ENCODE measurements at regions of chr1 and their contacts with region 1.

Region 1: GRCh38 chr1:117527566-117528102 is 78.2 kb upstream of the TENT5C start:
- DNase-seq: no peak
- ATAC-seq: no peak
- H3K4me3 ChIP-seq: no peak overlapping the region
- H3K27ac ChIP-seq: no peak overlapping the region
- H3K4me1 ChIP-seq: no peaks in the 10 kb centered on the region
- H3K27me3 ChIP-seq: no peaks in the 10 kb centered on the region
- CTCF ChIP-seq: no peak
- EP300 ChIP-seq: no peak
- POLR2A ChIP-seq: no peak
- RAD21 ChIP-seq: no peak

Region 2: DNA sequence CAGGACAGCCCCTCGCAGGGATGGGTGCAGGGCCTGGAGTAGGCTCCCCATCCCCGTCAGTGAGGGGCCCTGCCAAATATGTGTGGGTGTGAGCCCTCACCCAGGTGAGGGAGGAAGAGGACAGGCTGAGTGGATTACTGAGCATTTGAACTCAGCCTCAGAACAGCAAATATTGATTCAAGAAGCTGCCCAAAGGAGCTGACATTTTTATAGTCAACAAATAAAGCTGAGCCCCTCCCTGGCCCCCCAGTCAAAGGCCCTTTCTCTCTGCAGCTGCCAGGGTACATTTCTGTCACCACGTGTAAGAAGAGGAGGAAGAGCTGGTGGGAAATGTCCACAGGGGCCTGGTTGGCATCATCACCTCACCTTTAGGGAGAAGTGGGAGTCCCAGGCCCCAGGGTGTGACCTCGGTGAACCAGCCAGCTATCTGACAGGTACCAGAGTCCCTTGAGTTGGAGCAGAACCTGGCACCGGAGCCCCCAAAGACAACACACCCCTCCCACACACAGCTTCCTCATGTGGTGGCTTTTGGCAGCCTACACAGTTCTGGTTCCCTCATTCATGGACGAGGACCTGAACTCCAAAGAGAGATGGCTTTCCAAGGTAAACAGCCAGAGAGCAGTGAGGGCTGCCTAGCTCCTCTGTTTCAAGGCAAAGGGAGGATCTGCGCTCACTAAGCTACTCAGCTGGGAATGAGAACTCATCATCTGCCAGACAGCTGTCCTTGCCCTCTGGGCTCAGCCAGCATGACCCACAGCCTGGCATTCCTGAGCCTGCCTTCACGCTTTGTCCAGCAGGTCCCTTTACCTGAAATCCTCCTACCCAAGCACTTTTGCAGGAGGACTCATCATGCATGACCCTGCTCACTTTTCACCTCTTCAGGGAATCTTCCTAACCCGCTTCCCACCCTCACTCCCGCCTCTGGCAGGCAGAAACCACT is 35.2 kb after region 1 on chr1:
- CTCF ChIA-PET with region 1: no interaction called
- POLR2A ChIA-PET with region 1: no interaction called
- in situ Hi-C with region 1: no loop called
- intact Hi-C with region 1: no loop called
- DNase-seq: no peak
- ATAC-seq: no peak
- H3K4me3 ChIP-seq: no peak overlapping the region
- H3K27ac ChIP-seq: no peak overlapping the region
- H3K4me1 ChIP-seq: peaks cover 10 to 19% of the 10 kb centered on the region in 2 experiments
- H3K27me3 ChIP-seq: no peaks in the 10 kb centered on the region
- CTCF ChIP-seq: no peak
- EP300 ChIP-seq: no peak
- POLR2A ChIP-seq: no peak
- RAD21 ChIP-seq: no peak

Region 3: DNA sequence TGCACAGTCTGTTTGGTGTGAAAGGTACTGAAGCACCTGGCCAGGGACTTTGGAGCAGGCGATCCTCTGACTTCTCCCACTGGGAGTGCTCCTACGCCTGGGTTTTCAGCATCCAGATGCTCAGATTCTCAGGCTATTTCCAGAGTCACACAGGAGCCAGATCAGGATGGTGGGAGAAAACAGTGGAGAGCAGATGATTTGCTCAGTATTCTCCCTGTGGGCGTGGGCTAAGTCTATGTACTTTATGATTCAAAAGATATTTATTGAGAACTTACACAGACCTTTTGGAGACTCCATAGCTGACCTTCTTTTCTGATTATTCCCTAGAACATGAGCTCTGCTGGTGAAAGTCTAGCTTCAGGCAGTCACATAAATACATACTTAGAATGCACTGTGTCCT is 212.9 kb after region 1 on chr1:
- CTCF ChIA-PET with region 1: no interaction called
- POLR2A ChIA-PET with region 1: no interaction called
- in situ Hi-C with region 1: loop called (anchors 10 kb)
- intact Hi-C with region 1: no loop called
- DNase-seq: peak in 2 of 4 experiments; percentile 4 to 5
- ATAC-seq: peak; percentile 36
- H3K4me3 ChIP-seq: no peak overlapping the region
- H3K27ac ChIP-seq: no peak overlapping the region
- H3K4me1 ChIP-seq: peaks cover 0 to 1% of the 10 kb centered on the region in 2 experiments; a peak in 1 of 5 replicates
- H3K27me3 ChIP-seq: no peaks in the 10 kb centered on the region
- CTCF ChIP-seq: no peak
- EP300 ChIP-seq: no peak
- POLR2A ChIP-seq: no peak
- RAD21 ChIP-seq: no peak

Region 4: DNA sequence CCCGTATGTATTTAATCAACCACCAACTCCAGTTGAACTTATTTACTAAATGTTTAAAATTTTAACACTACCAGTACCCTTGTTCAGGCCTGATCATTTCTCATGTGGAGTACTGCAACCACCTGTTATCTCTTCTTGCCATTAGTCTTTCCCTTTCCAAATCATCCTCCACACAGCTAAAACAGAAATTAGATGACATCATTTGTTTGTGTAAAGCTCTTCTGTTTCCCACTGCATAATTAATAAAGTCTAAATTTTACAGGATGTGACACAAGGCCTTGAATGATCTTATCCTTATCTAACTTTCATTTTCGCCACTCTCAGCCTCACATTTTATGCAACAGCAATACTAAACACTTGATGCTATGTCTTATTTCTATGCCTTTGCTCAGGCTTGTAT is 377.4 kb after region 1 on chr1:
- CTCF ChIA-PET with region 1: no interaction called
- POLR2A ChIA-PET with region 1: no interaction called
- in situ Hi-C with region 1: loop called (anchors 10 kb)
- intact Hi-C with region 1: no loop called
- DNase-seq: no peak
- ATAC-seq: no peak
- H3K4me3 ChIP-seq: no peak overlapping the region
- H3K27ac ChIP-seq: no peak overlapping the region
- H3K4me1 ChIP-seq: no peaks in the 10 kb centered on the region
- H3K27me3 ChIP-seq: no peaks in the 10 kb centered on the region
- CTCF ChIP-seq: no peak
- EP300 ChIP-seq: no peak
- POLR2A ChIP-seq: no peak
- RAD21 ChIP-seq: no peak